Caco-2 (cell line): ENCODE measurements at regions of chr11 and their contacts with region 1.

Region 1: GRCh38 chr11:77091146-77091940 is 11.3 kb upstream of the OMP start:
- DNase-seq: peak; percentile 90 to 95
- H3K4me3 ChIP-seq: no peak overlapping the region
- H3K4me3 Mint-ChIP-seq: no peak overlapping the region
- H3K27ac Mint-ChIP-seq: peak overlapping the region; percentile 39
- H3K4me1 ChIP-seq: peaks cover 24% of the 10 kb centered on the region
- H3K4me1 Mint-ChIP-seq: peaks cover 21% of the 10 kb centered on the region
- H3K27me3 ChIP-seq: no peaks in the 10 kb centered on the region
- H3K27me3 Mint-ChIP-seq: no peaks in the 10 kb centered on the region
- CTCF ChIP-seq: peak; percentile 99 to 100

Region 2: DNA sequence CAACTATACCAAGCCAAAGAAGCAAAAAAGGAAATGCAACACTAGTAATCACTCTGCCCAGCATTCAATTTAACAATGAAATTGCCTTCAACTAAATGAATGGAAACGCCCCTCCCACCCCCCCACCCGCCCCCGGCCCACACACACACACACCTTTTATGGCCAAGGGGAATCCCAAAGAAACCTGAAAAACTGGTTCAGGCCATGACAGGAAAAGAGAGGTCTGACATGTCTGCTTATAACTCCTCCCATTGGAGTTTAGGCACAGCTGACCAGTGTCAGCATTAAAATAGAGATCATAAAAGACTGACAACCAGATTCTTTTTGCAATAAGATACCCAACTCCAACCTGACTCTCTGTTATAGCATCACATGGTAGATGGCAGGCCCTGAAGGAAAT is 188.0 kb before region 1 on chr11:
- CTCF ChIA-PET with region 1: no interaction called
- POLR2A ChIA-PET with region 1: no interaction called
- intact Hi-C with region 1: no loop called
- DNase-seq: peak; percentile 84 to 85
- H3K4me3 ChIP-seq: no peak overlapping the region
- H3K4me3 Mint-ChIP-seq: no peak overlapping the region
- H3K27ac Mint-ChIP-seq: no peak overlapping the region
- H3K4me1 ChIP-seq: peaks cover 22% of the 10 kb centered on the region
- H3K4me1 Mint-ChIP-seq: peaks cover 20% of the 10 kb centered on the region
- H3K27me3 ChIP-seq: no peaks in the 10 kb centered on the region
- H3K27me3 Mint-ChIP-seq: no peaks in the 10 kb centered on the region
- CTCF ChIP-seq: no peak

Region 3: GRCh38 chr11:76919887-76920746 is 171.2 kb before region 1 on chr11:
- CTCF ChIA-PET with region 1: interaction called, 67 read pairs
- POLR2A ChIA-PET with region 1: no interaction called
- intact Hi-C with region 1: loop called (anchors 1 kb)
- DNase-seq: peak; percentile 86 to 91
- H3K4me3 ChIP-seq: no peak overlapping the region
- H3K4me3 Mint-ChIP-seq: no peak overlapping the region
- H3K27ac Mint-ChIP-seq: no peak overlapping the region
- H3K4me1 ChIP-seq: peaks cover 32% of the 10 kb centered on the region
- H3K4me1 Mint-ChIP-seq: peaks cover 25% of the 10 kb centered on the region
- H3K27me3 ChIP-seq: no peaks in the 10 kb centered on the region
- H3K27me3 Mint-ChIP-seq: no peaks in the 10 kb centered on the region
- CTCF ChIP-seq: peak; percentile 95 to 98

Region 4: GRCh38 chr11:76978818-76979217 is 112.5 kb before region 1 on chr11:
- CTCF ChIA-PET with region 1: no interaction called
- POLR2A ChIA-PET with region 1: no interaction called
- intact Hi-C with region 1: no loop called
- DNase-seq: no peak
- H3K4me3 ChIP-seq: no peak overlapping the region
- H3K4me3 Mint-ChIP-seq: no peak overlapping the region
- H3K27ac Mint-ChIP-seq: no peak overlapping the region
- H3K4me1 ChIP-seq: no peaks in the 10 kb centered on the region
- H3K4me1 Mint-ChIP-seq: no peaks in the 10 kb centered on the region
- H3K27me3 ChIP-seq: no peaks in the 10 kb centered on the region
- H3K27me3 Mint-ChIP-seq: no peaks in the 10 kb centered on the region
- CTCF ChIP-seq: no peak

Region 5: GRCh38 chr11:77035039-77035994 is 56.0 kb before region 1 on chr11:
- CTCF ChIA-PET with region 1: interaction called, 26 read pairs
- POLR2A ChIA-PET with region 1: interaction called, 3 read pairs
- intact Hi-C with region 1: no loop called
- DNase-seq: peak in 1 of 2 experiments; percentile 46
- H3K4me3 ChIP-seq: no peak overlapping the region
- H3K4me3 Mint-ChIP-seq: peak overlapping the region; percentile 31
- H3K27ac Mint-ChIP-seq: no peak overlapping the region
- H3K4me1 ChIP-seq: peaks cover 28% of the 10 kb centered on the region
- H3K4me1 Mint-ChIP-seq: peaks cover 36% of the 10 kb centered on the region
- H3K27me3 ChIP-seq: no peaks in the 10 kb centered on the region
- H3K27me3 Mint-ChIP-seq: no peaks in the 10 kb centered on the region
- CTCF ChIP-seq: no peak

Region 6: DNA sequence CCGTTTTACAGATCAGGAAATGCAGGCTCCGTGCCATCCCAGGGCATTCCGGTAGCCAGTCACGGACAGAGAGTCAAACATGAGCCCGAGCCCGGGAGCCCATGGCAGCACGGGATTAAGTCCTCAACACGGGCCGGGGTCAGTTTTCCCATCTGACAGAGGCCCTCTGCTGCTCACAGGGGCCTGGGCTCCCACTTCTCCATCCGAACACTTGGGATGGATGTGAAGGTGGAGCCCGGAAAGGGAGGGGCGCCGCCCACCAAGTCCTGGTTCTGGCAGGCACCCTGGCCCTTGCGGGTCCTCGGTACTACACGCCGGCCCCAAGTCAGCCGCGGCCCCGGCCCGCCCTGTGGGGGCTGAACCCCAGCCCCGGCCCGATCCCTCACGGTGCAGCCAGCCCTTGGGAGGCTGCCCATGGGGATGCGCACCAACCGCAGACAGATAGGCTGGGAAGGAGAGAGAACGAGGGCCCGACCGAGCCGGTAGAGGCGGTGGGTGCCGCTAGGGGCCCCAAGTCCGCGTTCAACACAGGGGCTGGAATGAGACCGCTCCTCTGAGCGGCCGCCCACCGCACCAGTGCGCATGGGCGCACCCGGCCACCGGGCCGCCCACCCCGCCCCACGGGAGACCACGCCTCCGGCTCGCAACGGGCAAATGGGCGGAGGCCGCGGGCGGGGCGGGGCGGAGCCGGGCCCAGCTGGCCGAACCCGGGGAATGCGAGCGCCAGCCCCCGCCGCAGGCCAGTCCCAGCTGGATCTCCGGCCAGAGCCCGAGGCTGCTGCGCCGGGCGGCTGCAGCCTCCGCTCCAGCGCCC is 24.9 kb before region 1 on chr11 and contains the start of gene CAPN5:
- CTCF ChIA-PET with region 1: interaction called, 47 read pairs
- POLR2A ChIA-PET with region 1: interaction called, 3 read pairs
- intact Hi-C with region 1: loop called (anchors 1 kb)
- DNase-seq: peak; percentile 96 to 100
- H3K4me3 ChIP-seq: peak within 1 kb of the TSS; percentile 82
- H3K4me3 Mint-ChIP-seq: peak within 1 kb of the TSS; percentile 88
- H3K27ac Mint-ChIP-seq: peak within 1 kb of the TSS; percentile 69
- H3K4me1 ChIP-seq: peaks cover 18% of the 10 kb centered on the region
- H3K4me1 Mint-ChIP-seq: peaks cover 22% of the 10 kb centered on the region
- H3K27me3 ChIP-seq: no peaks in the 10 kb centered on the region
- H3K27me3 Mint-ChIP-seq: no peaks in the 10 kb centered on the region
- CTCF ChIP-seq: peak in 1 of 2 experiments; percentile 81
- total RNA-seq, gene CAPN5: 18.8 and 21.2 TPM in 2 replicates

Region 7: DNA sequence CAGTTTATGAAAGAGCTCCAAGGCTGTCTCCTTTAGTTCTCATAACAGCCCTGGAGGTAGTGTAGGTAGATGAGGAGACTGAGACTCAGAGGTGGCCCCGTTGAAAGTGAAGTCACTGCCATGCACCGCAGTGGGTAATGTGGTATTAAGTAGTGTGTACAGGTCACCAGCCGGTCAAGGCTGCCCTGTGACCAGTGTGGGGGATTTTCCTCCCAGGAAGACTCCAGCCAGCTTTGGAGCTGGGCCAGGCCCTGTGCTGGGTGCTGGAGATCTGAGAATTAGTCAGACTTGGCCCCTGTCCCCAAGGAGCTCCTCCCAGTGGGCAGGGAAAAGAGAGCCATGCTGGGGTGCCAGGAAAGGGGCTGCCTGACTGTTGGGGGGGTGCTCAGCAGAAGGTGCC is 16.6 kb after region 1 on chr11:
- CTCF ChIA-PET with region 1: interaction called, 13 read pairs
- POLR2A ChIA-PET with region 1: no interaction called
- intact Hi-C with region 1: loop called (anchors 1 kb)
- DNase-seq: no peak
- H3K4me3 ChIP-seq: no peak overlapping the region
- H3K4me3 Mint-ChIP-seq: no peak overlapping the region
- H3K27ac Mint-ChIP-seq: no peak overlapping the region
- H3K4me1 ChIP-seq: no peaks in the 10 kb centered on the region
- H3K4me1 Mint-ChIP-seq: peaks cover 7% of the 10 kb centered on the region
- H3K27me3 ChIP-seq: no peaks in the 10 kb centered on the region
- H3K27me3 Mint-ChIP-seq: no peaks in the 10 kb centered on the region
- CTCF ChIP-seq: no peak

Region 8: DNA sequence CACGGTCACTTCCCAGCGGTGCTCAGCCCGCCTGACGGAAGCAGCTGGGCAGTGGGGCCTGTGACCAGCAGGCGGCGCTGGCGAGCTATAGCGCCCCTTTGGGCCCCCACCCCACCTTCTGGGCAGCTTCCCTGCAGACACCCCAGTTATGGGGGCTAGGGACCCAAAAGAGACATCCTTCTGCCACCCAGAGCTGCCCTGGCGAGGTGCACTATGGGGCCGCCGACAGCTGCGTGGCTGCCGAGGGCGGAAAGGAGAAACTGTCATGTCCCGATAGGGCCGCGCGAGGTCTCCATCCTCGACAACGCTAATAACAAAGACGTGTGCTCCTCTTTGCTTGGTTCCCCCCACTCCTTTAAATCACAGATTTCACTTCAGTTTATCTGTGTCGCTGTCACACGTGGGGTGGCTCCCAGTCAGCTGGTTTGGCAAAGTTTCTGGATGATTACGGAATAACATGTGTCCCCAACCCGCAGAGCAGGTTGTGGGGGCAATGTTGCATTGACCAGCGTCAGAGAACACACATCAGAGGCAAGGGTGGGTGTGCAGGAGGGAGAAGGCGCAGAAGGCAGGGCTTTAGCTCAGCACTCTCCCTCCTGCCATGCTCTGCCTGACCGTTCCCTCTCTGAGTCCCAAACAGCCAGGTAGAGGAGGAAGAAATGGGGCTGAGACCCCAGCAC is 36.0 kb after region 1 on chr11:
- CTCF ChIA-PET with region 1: interaction called, 17 read pairs
- POLR2A ChIA-PET with region 1: no interaction called
- intact Hi-C with region 1: no loop called
- DNase-seq: peak; percentile 70 to 84
- H3K4me3 ChIP-seq: peak overlapping the region; percentile 47
- H3K4me3 Mint-ChIP-seq: peak overlapping the region; percentile 69
- H3K27ac Mint-ChIP-seq: peak overlapping the region; percentile 72
- H3K4me1 ChIP-seq: peaks cover 10% of the 10 kb centered on the region
- H3K4me1 Mint-ChIP-seq: peaks cover 19% of the 10 kb centered on the region
- H3K27me3 ChIP-seq: no peaks in the 10 kb centered on the region
- H3K27me3 Mint-ChIP-seq: no peaks in the 10 kb centered on the region
- CTCF ChIP-seq: peak; percentile 100

Region 9: DNA sequence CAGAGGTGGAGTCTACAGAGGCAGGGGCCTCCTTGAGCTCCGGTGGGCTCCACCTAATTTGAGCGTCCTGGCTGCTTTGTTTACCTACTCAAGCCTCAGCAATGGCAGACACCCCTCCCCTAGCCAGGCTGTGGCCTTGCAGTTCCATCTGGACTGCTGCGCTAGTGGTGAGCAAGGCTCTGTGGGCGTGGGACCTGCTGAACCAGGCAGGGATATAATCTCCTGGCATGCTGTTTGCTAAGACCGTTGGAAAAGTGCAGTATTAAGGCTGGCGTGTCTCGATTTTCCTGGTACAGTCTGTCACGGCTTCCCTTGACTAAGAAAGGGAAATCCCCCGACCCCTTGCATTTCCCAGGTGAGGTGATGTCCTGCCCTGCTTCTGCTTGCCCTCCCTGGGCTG is 132.5 kb after region 1 on chr11:
- CTCF ChIA-PET with region 1: no interaction called
- POLR2A ChIA-PET with region 1: no interaction called
- intact Hi-C with region 1: no loop called
- DNase-seq: no peak
- H3K4me3 ChIP-seq: no peak overlapping the region
- H3K4me3 Mint-ChIP-seq: no peak overlapping the region
- H3K27ac Mint-ChIP-seq: no peak overlapping the region
- H3K4me1 ChIP-seq: no peaks in the 10 kb centered on the region
- H3K4me1 Mint-ChIP-seq: no peaks in the 10 kb centered on the region
- H3K27me3 ChIP-seq: no peaks in the 10 kb centered on the region
- H3K27me3 Mint-ChIP-seq: peaks cover 15% of the 10 kb centered on the region
- CTCF ChIP-seq: no peak

Region 10: DNA sequence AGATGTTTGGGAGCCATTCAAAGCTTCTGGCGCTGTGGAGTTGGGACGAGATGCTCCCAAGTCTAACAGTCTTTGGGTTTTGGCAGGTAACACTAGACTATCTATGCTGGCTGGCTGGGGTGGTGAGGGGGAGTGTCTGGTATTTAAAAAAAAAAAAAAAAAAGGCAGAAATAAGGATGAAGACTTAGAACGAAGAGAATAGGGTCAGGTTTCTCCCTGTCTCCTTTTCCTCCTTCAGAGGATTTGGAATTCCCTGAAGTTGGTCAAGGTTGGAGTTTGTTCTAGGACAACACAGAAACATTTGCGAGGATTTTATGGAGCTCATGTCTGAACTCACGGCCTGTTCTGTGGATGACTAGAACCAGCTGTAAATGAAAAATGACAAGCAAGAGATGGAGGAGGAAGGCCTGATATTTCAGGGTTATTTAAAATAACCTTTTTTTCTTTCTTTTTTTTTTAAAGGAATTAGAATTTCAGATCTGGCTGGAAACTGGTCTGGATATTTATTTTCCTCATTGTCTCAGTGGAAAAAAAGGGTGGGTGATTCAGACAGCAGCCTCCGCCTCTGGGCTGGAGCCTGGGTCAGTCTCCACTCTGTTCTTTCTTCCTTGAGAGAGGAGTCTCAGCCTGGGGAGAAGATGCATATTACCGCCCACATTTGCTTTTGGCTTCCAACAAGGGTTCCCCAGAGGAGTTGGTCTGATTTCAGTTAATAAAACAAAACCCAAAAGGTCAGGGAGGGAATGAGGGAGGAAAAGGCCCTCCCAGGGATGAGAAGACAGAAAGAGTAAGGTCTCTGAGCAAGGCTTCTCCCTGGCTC is 1177.5 kb after region 1 on chr11:
- CTCF ChIA-PET with region 1: no interaction called
- POLR2A ChIA-PET with region 1: no interaction called
- intact Hi-C with region 1: no loop called
- DNase-seq: no peak
- H3K4me3 ChIP-seq: no peak overlapping the region
- H3K4me3 Mint-ChIP-seq: no peak overlapping the region
- H3K27ac Mint-ChIP-seq: no peak overlapping the region
- H3K4me1 ChIP-seq: no peaks in the 10 kb centered on the region
- H3K4me1 Mint-ChIP-seq: no peaks in the 10 kb centered on the region
- H3K27me3 ChIP-seq: no peaks in the 10 kb centered on the region
- H3K27me3 Mint-ChIP-seq: no peaks in the 10 kb centered on the region
- CTCF ChIP-seq: no peak